ENCODE measurements at regions of chr6 and their contacts with region 1.

Region 1: DNA sequence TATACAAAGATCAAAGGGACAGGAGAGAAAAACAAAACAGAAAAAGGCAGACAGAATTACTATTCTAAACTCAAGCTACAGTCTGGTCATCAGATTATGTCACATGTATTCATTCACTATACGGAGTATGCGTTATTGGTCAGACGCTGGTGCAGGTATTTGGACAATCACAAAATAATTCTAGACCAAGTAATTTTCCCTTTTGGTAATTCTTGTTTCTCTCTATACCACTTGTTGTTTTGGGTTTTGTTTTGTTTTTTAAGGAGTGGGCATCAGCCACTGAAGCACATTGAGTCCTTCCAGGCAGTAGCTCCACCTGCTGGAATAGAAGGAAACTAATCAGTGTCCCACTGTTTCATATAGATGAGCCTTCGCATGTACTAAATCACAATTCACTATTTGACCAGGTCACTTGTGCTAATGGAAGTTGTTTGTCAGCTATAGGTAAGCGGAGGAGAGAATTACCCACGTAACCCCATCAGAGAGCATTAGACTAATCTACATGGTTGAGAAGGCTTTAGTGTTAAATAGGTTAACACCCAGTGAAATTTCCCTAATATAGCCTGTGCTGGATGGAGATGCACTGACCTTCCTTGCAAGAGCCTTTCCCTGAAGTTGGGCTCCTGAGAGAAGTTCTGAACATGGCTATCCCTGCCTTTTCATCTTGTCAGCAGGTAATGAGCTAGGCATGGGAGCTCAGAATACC is 77.9 kb downstream of the TNFAIP3 start:
- DNase-seq: peak; percentile 66
- ATAC-seq: peak; percentile 72
- H3K4me3 ChIP-seq: no peak overlapping the region
- H3K4me3 Mint-ChIP-seq: no peak overlapping the region
- H3K27ac ChIP-seq: no peak overlapping the region
- H3K27ac Mint-ChIP-seq: no peak overlapping the region
- H3K4me1 ChIP-seq: peaks cover 15 to 19% of the 10 kb centered on the region in 2 donors
- H3K4me1 Mint-ChIP-seq: peaks cover 22% of the 10 kb centered on the region
- H3K27me3 ChIP-seq: no peaks in the 10 kb centered on the region
- H3K27me3 Mint-ChIP-seq: no peaks in the 10 kb centered on the region
- CTCF ChIP-seq: peak; percentile 87

Region 2: DNA sequence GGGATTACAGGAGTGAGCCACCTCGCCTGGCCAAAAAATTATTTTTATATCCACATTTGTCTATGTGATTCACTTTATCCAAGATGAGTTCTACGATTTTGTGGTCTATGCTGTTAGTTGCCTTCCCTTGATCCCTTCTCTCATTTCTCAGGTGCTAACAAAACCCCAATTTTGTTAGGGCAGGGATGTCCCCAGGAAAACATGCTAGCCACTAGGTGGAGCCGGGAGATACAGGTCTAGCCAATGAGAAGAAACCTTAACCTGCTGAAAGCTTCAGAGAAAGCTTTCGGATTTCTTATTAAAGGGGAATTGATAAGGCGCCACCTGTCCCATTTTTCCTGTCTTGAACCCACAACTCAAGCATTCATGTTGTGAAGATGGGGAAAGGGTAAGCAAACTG is 283.3 kb before region 1 on chr6:
- CTCF ChIA-PET with region 1: interaction called, 15 read pairs
- POLR2A ChIA-PET with region 1: no interaction called
- intact Hi-C with region 1: no loop called
- DNase-seq: peak; percentile 65
- ATAC-seq: peak; percentile 49
- H3K4me3 ChIP-seq: no peak overlapping the region
- H3K4me3 Mint-ChIP-seq: no peak overlapping the region
- H3K27ac ChIP-seq: no peak overlapping the region
- H3K27ac Mint-ChIP-seq: no peak overlapping the region
- H3K4me1 ChIP-seq: no peaks in the 10 kb centered on the region
- H3K4me1 Mint-ChIP-seq: no peaks in the 10 kb centered on the region
- H3K27me3 ChIP-seq: no peaks in the 10 kb centered on the region
- H3K27me3 Mint-ChIP-seq: peaks cover 7% of the 10 kb centered on the region
- CTCF ChIP-seq: peak; percentile 58

Region 3: DNA sequence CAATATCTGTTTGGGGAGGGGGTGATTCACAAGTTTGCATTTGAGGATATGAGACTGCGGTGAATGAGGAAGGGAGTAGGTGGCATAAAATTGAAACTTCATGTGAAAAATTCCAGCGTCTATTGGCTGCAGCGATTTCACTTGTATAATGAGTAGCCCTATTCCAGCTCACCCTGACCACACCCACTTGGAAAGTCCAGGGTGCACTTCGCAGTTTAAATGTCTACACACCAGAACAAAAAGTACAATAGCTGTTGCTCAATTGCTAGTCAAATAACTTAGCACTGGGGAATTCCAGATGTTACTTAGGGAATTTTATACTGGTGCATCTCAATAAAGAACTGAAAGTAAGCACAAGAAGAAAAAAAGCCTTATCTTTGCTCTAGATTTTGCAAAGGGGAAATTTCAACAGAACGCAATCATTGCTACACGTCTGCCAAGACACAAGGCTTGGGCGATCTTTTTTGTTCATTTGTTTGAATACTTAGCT is 71.6 kb before region 1 on chr6:
- CTCF ChIA-PET with region 1: interaction called, 199 read pairs
- POLR2A ChIA-PET with region 1: no interaction called
- intact Hi-C with region 1: loop called (anchors 1 kb)
- DNase-seq: peak; percentile 91
- ATAC-seq: peak; percentile 70
- H3K4me3 ChIP-seq: peak overlapping the region in 2 of 5 experiments; percentile 4 to 17
- H3K4me3 Mint-ChIP-seq: peak overlapping the region; percentile 94
- H3K27ac ChIP-seq: peak overlapping the region; percentile 51 to 96
- H3K27ac Mint-ChIP-seq: peak overlapping the region; percentile 80
- H3K4me1 ChIP-seq: peaks cover 58 to 64% of the 10 kb centered on the region in 2 donors
- H3K4me1 Mint-ChIP-seq: peaks cover 70% of the 10 kb centered on the region
- H3K27me3 ChIP-seq: no peaks in the 10 kb centered on the region
- H3K27me3 Mint-ChIP-seq: no peaks in the 10 kb centered on the region
- CTCF ChIP-seq: no peak

Region 4: DNA sequence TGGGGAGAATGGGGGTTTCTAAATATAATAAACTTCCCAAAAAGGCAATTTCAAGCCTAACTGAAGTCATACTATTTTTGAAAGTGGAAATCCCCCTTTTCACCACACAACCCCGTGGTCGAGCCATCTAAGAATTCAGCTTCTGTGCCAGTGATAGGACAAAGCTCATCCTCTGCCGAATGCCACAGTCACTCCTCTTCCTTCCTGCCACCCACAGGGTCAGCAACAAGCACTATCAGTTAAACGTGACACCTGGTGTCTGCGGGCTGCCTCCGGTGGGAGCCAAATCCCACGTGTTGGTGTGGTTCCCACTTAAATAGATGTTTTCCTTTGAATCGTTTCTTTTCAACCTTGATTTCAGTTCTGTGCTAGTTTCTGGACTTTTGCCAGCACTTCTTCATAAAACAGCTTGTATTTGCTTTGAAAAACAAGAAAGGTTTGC is 17.1 kb before region 1 on chr6:
- CTCF ChIA-PET with region 1: interaction called, 9 read pairs
- POLR2A ChIA-PET with region 1: no interaction called
- intact Hi-C with region 1: loop called (anchors 1 kb)
- DNase-seq: peak; percentile 89
- ATAC-seq: peak; percentile 95
- H3K4me3 ChIP-seq: peak overlapping the region in 2 of 5 experiments; percentile 25 to 56
- H3K4me3 Mint-ChIP-seq: peak overlapping the region; percentile 58
- H3K27ac ChIP-seq: peak overlapping the region; percentile 84 to 87
- H3K27ac Mint-ChIP-seq: peak overlapping the region; percentile 76
- H3K4me1 ChIP-seq: peaks cover 32 to 37% of the 10 kb centered on the region in 2 donors
- H3K4me1 Mint-ChIP-seq: peaks cover 40% of the 10 kb centered on the region
- H3K27me3 ChIP-seq: no peaks in the 10 kb centered on the region
- H3K27me3 Mint-ChIP-seq: no peaks in the 10 kb centered on the region
- CTCF ChIP-seq: no peak

Region 5: DNA sequence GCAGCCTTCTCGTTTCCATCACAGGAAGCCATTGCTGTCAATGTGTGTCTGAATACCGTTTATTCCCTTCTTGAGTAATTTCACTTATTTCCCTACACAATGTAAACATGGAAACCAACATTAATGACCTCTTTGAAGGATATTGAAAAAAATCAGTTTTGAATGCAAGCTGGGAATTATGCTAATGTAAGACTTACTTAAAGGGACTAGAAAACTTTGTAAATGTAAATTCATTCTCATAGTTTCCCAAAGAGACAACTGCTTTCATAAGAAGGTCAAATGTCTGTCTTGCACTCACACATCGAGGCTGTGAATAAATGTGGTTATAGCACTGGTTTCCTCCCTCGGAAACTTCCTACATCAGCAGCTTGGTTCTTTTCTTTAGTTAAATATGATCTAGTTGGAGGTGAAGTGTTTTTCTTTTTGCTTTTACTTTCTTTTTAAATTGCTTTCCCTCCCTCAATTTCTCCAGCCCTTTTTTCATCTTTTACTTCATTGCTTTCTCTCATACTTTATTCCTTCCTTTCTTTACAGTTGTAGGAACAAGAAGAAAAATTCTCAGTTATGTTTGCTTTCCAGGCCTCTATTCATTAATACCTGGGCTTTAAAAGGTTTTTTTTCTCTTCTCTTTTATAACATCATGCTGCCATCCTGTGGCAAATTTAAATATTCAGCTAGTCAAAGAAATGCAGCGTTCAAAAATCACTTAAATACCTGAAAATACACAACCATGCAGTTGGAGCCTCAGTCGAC is 30.4 kb after region 1 on chr6:
- CTCF ChIA-PET with region 1: interaction called, 13 read pairs
- POLR2A ChIA-PET with region 1: no interaction called
- intact Hi-C with region 1: loop called (anchors 2 kb)
- DNase-seq: peak; percentile 57
- ATAC-seq: no peak
- H3K4me3 ChIP-seq: no peak overlapping the region
- H3K4me3 Mint-ChIP-seq: peak overlapping the region; percentile 3
- H3K27ac ChIP-seq: peak overlapping the region in 1 of 2 donors; percentile 68
- H3K27ac Mint-ChIP-seq: peak overlapping the region; percentile 12
- H3K4me1 ChIP-seq: peaks cover 8 to 17% of the 10 kb centered on the region in 2 donors
- H3K4me1 Mint-ChIP-seq: peaks cover 8% of the 10 kb centered on the region
- H3K27me3 ChIP-seq: no peaks in the 10 kb centered on the region
- H3K27me3 Mint-ChIP-seq: no peaks in the 10 kb centered on the region
- CTCF ChIP-seq: peak; percentile 56

Region 6: DNA sequence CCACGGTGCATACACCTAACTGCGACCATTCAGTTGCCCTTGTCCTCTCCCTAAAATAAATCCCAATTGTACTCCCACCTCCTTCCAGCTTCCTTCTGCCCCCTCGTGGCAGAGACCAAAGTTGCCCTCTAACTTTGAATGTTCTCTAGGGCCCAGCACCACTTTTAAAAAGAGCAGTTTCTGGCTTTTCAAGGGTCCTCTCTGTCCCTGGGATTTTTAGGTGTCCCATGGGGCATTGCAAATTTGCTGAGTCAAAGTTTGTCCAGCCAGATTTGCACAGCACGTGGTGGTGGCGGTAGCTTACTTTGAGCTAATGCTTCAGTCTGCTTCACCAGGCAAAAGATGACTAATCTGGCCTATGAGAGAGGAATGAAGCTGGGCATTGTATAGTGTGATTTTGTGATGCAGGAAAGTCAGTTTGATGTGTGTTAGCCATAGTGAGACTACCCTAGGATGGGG is 62.1 kb after region 1 on chr6:
- CTCF ChIA-PET with region 1: interaction called, 36 read pairs
- POLR2A ChIA-PET with region 1: no interaction called
- intact Hi-C with region 1: loop called (anchors 2 kb)
- DNase-seq: peak; percentile 36
- ATAC-seq: no peak
- H3K4me3 ChIP-seq: no peak overlapping the region
- H3K4me3 Mint-ChIP-seq: no peak overlapping the region
- H3K27ac ChIP-seq: no peak overlapping the region
- H3K27ac Mint-ChIP-seq: no peak overlapping the region
- H3K4me1 ChIP-seq: no peaks in the 10 kb centered on the region
- H3K4me1 Mint-ChIP-seq: peaks cover under 1% of the 10 kb centered on the region
- H3K27me3 ChIP-seq: peaks cover 0 to 2% (median 0%) of the 10 kb centered on the region in 4 experiments
- H3K27me3 Mint-ChIP-seq: peaks cover 10% of the 10 kb centered on the region
- CTCF ChIP-seq: peak; percentile 58

Measured in B cell (primary cell).